Naive thymus-derived CD4-positive, alpha-beta T cell (primary cell): ENCODE measurements at regions of chr6 and their contacts with region 1.

Region 1: DNA sequence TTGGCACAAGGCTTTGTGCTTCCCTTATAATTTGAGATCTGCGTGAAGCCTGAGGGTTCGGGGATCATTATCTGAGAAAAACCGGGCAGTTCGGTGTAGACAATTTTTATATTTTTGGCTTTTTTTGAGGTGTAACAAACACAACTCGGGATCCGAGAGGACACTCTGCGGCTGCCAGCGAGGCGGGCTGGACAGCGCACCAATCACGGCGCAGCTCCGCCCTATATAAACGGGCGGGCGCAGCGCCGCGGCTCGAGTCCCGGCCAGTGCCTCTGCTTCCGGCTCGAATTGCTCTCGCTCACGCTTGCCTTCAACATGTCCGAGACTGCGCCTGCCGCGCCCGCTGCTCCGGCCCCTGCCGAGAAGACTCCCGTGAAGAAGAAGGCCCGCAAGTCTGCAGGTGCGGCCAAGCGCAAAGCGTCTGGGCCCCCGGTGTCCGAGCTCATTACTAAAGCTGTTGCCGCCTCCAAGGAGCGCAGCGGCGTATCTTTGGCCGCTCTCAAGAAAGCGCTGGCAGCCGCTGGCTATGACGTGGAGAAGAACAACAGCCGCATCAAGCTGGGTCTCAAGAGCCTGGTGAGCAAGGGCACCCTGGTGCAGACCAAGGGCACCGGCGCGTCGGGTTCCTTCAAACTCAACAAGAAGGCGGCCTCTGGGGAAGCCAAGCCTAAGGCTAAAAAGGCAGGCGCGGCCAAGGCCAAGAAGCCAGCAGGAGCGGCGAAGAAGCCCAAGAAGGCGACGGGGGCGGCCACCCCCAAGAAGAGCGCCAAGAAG is 69.0 kb downstream of the HFE start:
- DNase-seq: peak; percentile 80 to 92 (median 88)
- ATAC-seq: peak; percentile 61
- H3K4me3 ChIP-seq: peak overlapping the region; percentile 82
- H3K4me3 Mint-ChIP-seq: peak overlapping the region; percentile 96 to 100 (median 98)
- H3K27ac ChIP-seq: peak overlapping the region; percentile 92
- H3K27ac Mint-ChIP-seq: peak overlapping the region; percentile 95 to 99 (median 98)
- H3K4me1 ChIP-seq: peaks cover 19 to 23% of the 10 kb centered on the region in 2 donors
- H3K4me1 Mint-ChIP-seq: peaks cover 16 to 58% (median 30%) of the 10 kb centered on the region in 7 donors
- H3K27me3 ChIP-seq: no peaks in the 10 kb centered on the region
- H3K27me3 Mint-ChIP-seq: peaks cover 0 to 33% (median 0%) of the 10 kb centered on the region in 5 donors

Region 2: DNA sequence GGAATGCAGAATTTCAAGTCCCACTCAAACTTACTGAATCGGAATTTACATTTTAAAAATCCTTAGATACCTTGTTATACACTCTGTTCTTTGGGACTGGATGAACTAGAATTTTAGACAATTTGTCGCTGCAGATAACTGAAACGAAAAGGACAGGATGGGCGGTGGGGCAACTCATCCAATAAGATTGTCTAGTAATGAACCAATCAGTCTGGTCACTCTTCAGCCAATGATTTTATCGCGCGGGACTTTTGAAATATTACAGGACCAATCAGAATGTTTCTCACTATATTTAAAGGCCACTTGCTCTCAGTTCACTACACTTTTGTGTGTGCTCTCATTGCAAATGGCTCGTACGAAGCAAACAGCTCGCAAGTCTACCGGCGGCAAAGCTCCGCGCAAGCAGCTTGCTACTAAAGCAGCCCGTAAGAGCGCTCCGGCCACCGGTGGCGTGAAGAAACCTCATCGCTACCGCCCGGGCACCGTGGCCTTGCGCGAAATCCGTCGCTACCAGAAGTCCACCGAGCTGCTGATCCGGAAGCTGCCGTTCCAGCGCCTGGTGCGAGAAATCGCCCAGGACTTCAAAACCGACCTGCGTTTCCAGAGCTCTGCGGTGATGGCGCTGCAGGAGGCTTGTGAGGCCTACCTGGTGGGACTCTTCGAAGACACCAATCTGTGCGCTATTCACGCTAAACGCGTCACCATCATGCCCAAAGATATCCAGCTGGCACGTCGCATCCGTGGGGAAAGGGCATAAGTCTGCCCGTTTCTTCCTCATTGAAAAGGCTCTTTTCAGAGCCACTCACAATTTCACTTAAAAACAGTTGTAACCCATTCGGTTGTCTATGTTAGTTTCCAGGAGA is 111.0 kb before region 1 on chr6:
- CTCF ChIA-PET with region 1: interaction called, 3 read pairs
- POLR2A ChIA-PET with region 1: interaction called, 231 read pairs
- intact Hi-C with region 1: loop called in 1 of 2 experiments (anchors 1 kb)
- DNase-seq: peak; percentile 39 to 93 (median 89)
- ATAC-seq: peak; percentile 68
- H3K4me3 ChIP-seq: peak overlapping the region; percentile 91
- H3K4me3 Mint-ChIP-seq: peak overlapping the region; percentile 87 to 98 (median 94)
- H3K27ac ChIP-seq: peak overlapping the region; percentile 90
- H3K27ac Mint-ChIP-seq: peak overlapping the region; percentile 80 to 98 (median 95)
- H3K4me1 ChIP-seq: peaks cover 7 to 19% of the 10 kb centered on the region in 2 donors
- H3K4me1 Mint-ChIP-seq: peaks cover 8 to 51% (median 20%) of the 10 kb centered on the region in 7 donors
- H3K27me3 ChIP-seq: no peaks in the 10 kb centered on the region
- H3K27me3 Mint-ChIP-seq: peaks cover 0 to 3% (median 0%) of the 10 kb centered on the region in 5 donors

Region 3: GRCh38 chr6:26115226-26115625 is 41.0 kb before region 1 on chr6:
- CTCF ChIA-PET with region 1: no interaction called
- POLR2A ChIA-PET with region 1: interaction called, 34 read pairs
- intact Hi-C with region 1: no loop called
- DNase-seq: no peak
- ATAC-seq: no peak
- H3K4me3 ChIP-seq: no peak overlapping the region
- H3K4me3 Mint-ChIP-seq: peak overlapping the region in 1 of 10 donors; percentile 61
- H3K27ac ChIP-seq: no peak overlapping the region
- H3K27ac Mint-ChIP-seq: peak overlapping the region in 1 of 9 donors; percentile 72
- H3K4me1 ChIP-seq: peaks cover 0 to 7% of the 10 kb centered on the region in 2 donors
- H3K4me1 Mint-ChIP-seq: peaks cover 5 to 15% (median 9%) of the 10 kb centered on the region in 7 donors
- H3K27me3 ChIP-seq: no peaks in the 10 kb centered on the region
- H3K27me3 Mint-ChIP-seq: peaks cover 0 to 5% (median 0%) of the 10 kb centered on the region in 5 donors

Region 4: DNA sequence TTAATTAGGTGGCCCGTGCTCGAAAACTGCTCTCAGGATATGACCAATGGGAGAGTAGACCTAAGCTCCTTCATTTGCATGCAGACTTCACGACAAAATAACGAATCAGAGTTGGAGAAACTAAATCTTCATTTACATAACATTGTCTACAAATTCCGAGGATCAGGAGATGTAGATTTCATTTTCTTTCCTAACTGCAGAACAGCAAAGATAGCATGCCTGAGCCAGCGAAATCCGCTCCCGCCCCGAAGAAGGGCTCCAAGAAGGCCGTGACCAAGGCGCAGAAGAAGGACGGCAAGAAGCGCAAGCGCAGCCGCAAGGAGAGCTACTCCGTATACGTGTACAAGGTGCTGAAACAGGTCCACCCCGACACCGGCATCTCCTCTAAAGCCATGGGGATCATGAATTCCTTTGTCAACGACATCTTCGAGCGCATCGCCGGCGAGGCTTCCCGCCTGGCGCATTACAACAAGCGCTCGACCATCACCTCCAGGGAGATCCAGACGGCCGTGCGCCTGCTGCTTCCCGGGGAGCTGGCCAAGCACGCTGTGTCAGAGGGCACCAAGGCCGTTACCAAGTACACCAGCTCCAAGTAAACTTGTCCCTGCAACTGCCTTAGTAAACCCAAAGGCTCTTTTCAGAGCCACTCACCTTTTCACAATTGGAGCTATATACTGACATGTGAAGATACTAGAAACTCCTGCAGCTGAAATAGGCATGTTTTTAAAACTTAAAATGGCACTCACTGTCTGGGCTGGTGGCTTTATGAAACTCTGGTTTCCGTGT is 27.5 kb after region 1 on chr6:
- CTCF ChIA-PET with region 1: interaction called, 6 read pairs
- POLR2A ChIA-PET with region 1: interaction called, 2,611 read pairs
- intact Hi-C with region 1: loop called (anchors 1 kb)
- DNase-seq: peak; percentile 43 to 83 (median 77)
- ATAC-seq: peak; percentile 91
- H3K4me3 ChIP-seq: peak overlapping the region; percentile 82
- H3K4me3 Mint-ChIP-seq: peak overlapping the region; percentile 84 to 99 (median 98)
- H3K27ac ChIP-seq: peak overlapping the region; percentile 76
- H3K27ac Mint-ChIP-seq: peak overlapping the region; percentile 83 to 99 (median 90)
- H3K4me1 ChIP-seq: peaks cover 13 to 30% of the 10 kb centered on the region in 2 donors
- H3K4me1 Mint-ChIP-seq: peaks cover 19 to 59% (median 49%) of the 10 kb centered on the region in 7 donors
- H3K27me3 ChIP-seq: no peaks in the 10 kb centered on the region
- H3K27me3 Mint-ChIP-seq: no peaks in the 10 kb centered on the region

Region 5: DNA sequence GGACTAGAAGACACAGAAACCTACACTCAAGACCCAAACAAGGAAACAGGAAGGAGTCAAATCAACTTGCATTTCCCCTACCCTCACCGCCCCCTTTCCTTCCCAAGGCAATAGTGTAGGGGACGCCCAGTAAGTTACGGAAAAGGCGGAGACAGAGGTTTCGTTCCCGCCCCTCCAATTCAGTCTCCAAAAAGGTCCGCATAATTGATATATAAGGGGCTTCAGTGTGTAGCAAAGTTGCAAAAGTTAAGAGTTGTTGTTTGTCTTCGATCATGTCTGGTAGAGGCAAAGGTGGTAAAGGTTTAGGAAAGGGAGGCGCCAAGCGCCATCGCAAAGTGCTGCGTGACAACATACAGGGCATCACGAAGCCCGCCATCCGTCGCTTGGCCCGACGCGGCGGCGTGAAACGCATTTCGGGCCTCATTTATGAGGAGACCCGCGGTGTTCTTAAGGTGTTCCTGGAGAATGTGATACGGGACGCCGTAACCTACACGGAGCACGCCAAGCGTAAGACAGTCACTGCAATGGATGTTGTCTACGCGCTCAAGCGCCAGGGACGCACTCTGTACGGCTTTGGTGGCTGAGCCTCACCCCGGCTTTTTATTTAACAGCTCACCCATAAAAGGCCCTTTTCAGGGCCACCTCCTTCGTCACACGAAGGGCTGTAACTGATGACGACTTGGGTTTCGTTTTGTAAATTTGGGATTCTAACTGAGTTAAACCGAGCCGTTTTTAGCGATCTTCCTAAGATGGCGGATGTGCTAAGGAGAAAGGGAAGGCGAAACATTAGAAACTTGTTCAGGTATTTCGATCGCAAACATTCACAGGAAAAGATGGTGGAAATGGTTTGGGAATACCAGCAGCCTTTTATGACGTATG is 84.1 kb after region 1 on chr6:
- CTCF ChIA-PET with region 1: no interaction called
- POLR2A ChIA-PET with region 1: interaction called, 280 read pairs
- intact Hi-C with region 1: loop called in 1 of 2 experiments (anchors 1 kb)
- DNase-seq: peak; percentile 56 to 90 (median 78)
- ATAC-seq: peak; percentile 87
- H3K4me3 ChIP-seq: peak overlapping the region; percentile 55
- H3K4me3 Mint-ChIP-seq: peak overlapping the region; percentile 80 to 93 (median 89)
- H3K27ac ChIP-seq: peak overlapping the region; percentile 83
- H3K27ac Mint-ChIP-seq: peak overlapping the region; percentile 89 to 99 (median 96)
- H3K4me1 ChIP-seq: peaks cover 6 to 11% of the 10 kb centered on the region in 2 donors
- H3K4me1 Mint-ChIP-seq: peaks cover 8 to 37% (median 25%) of the 10 kb centered on the region in 7 donors
- H3K27me3 ChIP-seq: no peaks in the 10 kb centered on the region
- H3K27me3 Mint-ChIP-seq: no peaks in the 10 kb centered on the region

Region 6: DNA sequence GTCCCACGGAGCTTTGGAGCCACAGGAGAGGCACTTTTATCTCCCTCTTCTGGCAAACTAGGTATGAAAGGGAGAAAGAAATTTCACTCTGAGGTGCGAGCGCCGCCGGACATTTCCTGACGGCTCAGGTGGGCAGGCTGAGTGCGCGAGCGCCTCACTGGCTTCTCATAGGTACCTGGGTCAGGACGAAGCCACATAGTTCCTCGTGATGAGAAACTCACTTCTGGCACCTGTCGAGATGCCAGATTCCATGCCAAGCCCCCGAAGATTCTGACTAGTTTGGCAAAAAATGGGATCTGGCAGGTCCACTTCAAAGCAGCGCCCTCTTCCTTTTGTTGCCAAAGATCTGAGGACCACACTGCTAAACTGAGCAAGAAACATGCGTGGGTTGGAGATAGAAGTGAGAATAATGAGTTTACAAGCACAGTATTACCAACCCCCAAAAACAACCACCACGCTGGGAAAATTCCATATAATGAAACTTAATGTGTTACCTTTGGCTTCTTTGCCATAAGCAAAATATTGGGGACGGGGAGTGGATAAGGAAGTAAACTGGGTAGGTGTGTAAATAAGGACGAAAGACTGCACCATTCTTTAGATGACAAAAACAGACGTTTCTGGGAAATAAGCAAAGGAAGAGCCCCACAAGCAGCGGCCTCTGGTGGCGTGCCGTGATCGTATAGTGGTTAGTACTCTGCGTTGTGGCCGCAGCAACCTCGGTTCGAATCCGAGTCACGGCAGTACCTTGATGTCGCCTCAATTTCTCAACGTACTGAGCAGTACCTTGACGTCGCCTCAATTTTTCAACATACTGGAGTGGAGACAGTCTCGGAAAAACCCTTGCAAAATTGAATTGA is 1001.4 kb after region 1 on chr6:
- CTCF ChIA-PET with region 1: no interaction called
- POLR2A ChIA-PET with region 1: interaction called, 10 read pairs
- intact Hi-C with region 1: no loop called
- DNase-seq: peak in 8 of 9 donors; percentile 77 to 92 (median 87)
- ATAC-seq: peak; percentile 86
- H3K4me3 ChIP-seq: peak overlapping the region; percentile 76
- H3K4me3 Mint-ChIP-seq: peak overlapping the region; percentile 82 to 94 (median 87)
- H3K27ac ChIP-seq: peak overlapping the region; percentile 54
- H3K27ac Mint-ChIP-seq: peak overlapping the region; percentile 80 to 96 (median 92)
- H3K4me1 ChIP-seq: peaks cover 12% of the 10 kb centered on the region in 2 donors
- H3K4me1 Mint-ChIP-seq: peaks cover 29 to 47% (median 43%) of the 10 kb centered on the region in 7 donors
- H3K27me3 ChIP-seq: no peaks in the 10 kb centered on the region
- H3K27me3 Mint-ChIP-seq: peaks cover 0 to 6% (median 0%) of the 10 kb centered on the region in 5 donors

Region 7: GRCh38 chr6:27893059-27893835 is 1737.0 kb after region 1 on chr6:
- CTCF ChIA-PET with region 1: no interaction called
- POLR2A ChIA-PET with region 1: interaction called, 55 read pairs
- intact Hi-C with region 1: loop called (anchors 1 to 2 kb)
- DNase-seq: peak; percentile 75 to 95 (median 92)
- ATAC-seq: peak; percentile 83
- H3K4me3 ChIP-seq: peak overlapping the region; percentile 72
- H3K4me3 Mint-ChIP-seq: no peak overlapping the region
- H3K27ac ChIP-seq: peak overlapping the region; percentile 82
- H3K27ac Mint-ChIP-seq: peak overlapping the region in 1 of 9 donors; percentile 97
- H3K4me1 ChIP-seq: peaks cover 4 to 20% of the 10 kb centered on the region in 2 donors
- H3K4me1 Mint-ChIP-seq: peaks cover 9 to 55% (median 30%) of the 10 kb centered on the region in 7 donors
- H3K27me3 ChIP-seq: no peaks in the 10 kb centered on the region
- H3K27me3 Mint-ChIP-seq: peaks cover 0 to 8% (median 0%) of the 10 kb centered on the region in 5 donors